Colonic mucosa (tissue), 4 donors: ENCODE measurements at regions of chr19 and their contacts with region 1.

Region 1: GRCh38 chr19:54231077-54231931 is 8.5 kb upstream of the LILRB3 start:
- DNase-seq: peak; percentile 88
- H3K4me3 ChIP-seq: no peak overlapping the region
- H3K27ac ChIP-seq: no peak overlapping the region
- H3K4me1 ChIP-seq: no peaks in the 10 kb centered on the region
- H3K27me3 ChIP-seq: no peaks in the 10 kb centered on the region
- CTCF ChIP-seq: peak; percentile 92

Region 2: GRCh38 chr19:54168174-54168917 is 63.0 kb before region 1 on chr19:
- intact Hi-C with region 1: loop called (anchors 5 kb)
- DNase-seq: peak; percentile 98
- H3K4me3 ChIP-seq: no peak overlapping the region
- H3K27ac ChIP-seq: no peak overlapping the region
- H3K4me1 ChIP-seq: peaks cover 2% of the 10 kb centered on the region
- H3K27me3 ChIP-seq: no peaks in the 10 kb centered on the region
- CTCF ChIP-seq: peak; percentile 86

Region 3: GRCh38 chr19:54179921-54180461 is 51.3 kb before region 1 on chr19:
- intact Hi-C with region 1: no loop called
- DNase-seq: peak; percentile 75
- H3K4me3 ChIP-seq: no peak overlapping the region
- H3K27ac ChIP-seq: no peak overlapping the region
- H3K4me1 ChIP-seq: no peaks in the 10 kb centered on the region
- H3K27me3 ChIP-seq: no peaks in the 10 kb centered on the region
- CTCF ChIP-seq: peak; percentile 41